Heart right ventricle (tissue), 16 donors: ENCODE measurements at regions of chr12 and their contacts with region 1.

Region 1: GRCh38 chr12:47779301-47779942 is 6.4 kb downstream of the SLC48A1 start:
- DNase-seq: peak; percentile 88 to 91
- ATAC-seq: peak; percentile 68 to 84 (median 76)
- H3K4me3 ChIP-seq: no peak overlapping the region
- H3K27ac ChIP-seq: peak overlapping the region in 2 of 10 donors; percentile 39 to 52
- H3K4me1 ChIP-seq: peaks cover 22 to 71% (median 52%) of the 10 kb centered on the region in 9 donors
- H3K27me3 ChIP-seq: no peaks in the 10 kb centered on the region
- CTCF ChIP-seq: peak; percentile 90 to 97 (median 95)

Region 2: GRCh38 chr12:47742253-47742825 is 37.1 kb before region 1 on chr12:
- intact Hi-C with region 1: loop called in 1 of 10 experiments (anchors 5 kb)
- DNase-seq: peak; percentile 45 to 63
- ATAC-seq: no peak
- H3K4me3 ChIP-seq: no peak overlapping the region
- H3K27ac ChIP-seq: peak overlapping the region in 1 of 10 donors; percentile 78
- H3K4me1 ChIP-seq: peaks cover 21 to 65% (median 42%) of the 10 kb centered on the region in 9 donors
- H3K27me3 ChIP-seq: peaks cover 0 to 5% (median 0%) of the 10 kb centered on the region in 7 donors
- CTCF ChIP-seq: peak; percentile 85 to 95 (median 89)

Region 3: GRCh38 chr12:47797441-47797840 is 18.0 kb after region 1 on chr12:
- intact Hi-C with region 1: loop called in 1 of 10 experiments (anchors 1 kb)
- DNase-seq: no peak
- ATAC-seq: peak in 4 of 8 donors; percentile 18 to 31 (median 27)
- H3K4me3 ChIP-seq: no peak overlapping the region
- H3K27ac ChIP-seq: no peak overlapping the region
- H3K4me1 ChIP-seq: peaks cover 35 to 51% (median 42%) of the 10 kb centered on the region in 9 donors
- H3K27me3 ChIP-seq: no peaks in the 10 kb centered on the region
- CTCF ChIP-seq: peak in 7 of 9 donors; percentile 31 to 58 (median 44)

Region 4: GRCh38 chr12:47819896-47820630 is 40.6 kb after region 1 on chr12 and contains the start of gene HDAC7:
- intact Hi-C with region 1: loop called in 1 of 10 experiments (anchors 5 kb)
- DNase-seq: peak; percentile 92 to 93
- ATAC-seq: peak; percentile 51 to 81 (median 72)
- H3K4me3 ChIP-seq: peak within 1 kb of the TSS; percentile 61 to 91 (median 83)
- H3K27ac ChIP-seq: peak within 1 kb of the TSS; percentile 94 to 100 (median 99)
- H3K4me1 ChIP-seq: peaks cover 28 to 90% (median 84%) of the 10 kb centered on the region in 9 donors
- H3K27me3 ChIP-seq: no peaks in the 10 kb centered on the region
- CTCF ChIP-seq: peak in 1 of 9 donors; percentile 9
- total RNA-seq, gene HDAC7: 26.9 to 50.7 (median 38.5) TPM

Region 5: DNA sequence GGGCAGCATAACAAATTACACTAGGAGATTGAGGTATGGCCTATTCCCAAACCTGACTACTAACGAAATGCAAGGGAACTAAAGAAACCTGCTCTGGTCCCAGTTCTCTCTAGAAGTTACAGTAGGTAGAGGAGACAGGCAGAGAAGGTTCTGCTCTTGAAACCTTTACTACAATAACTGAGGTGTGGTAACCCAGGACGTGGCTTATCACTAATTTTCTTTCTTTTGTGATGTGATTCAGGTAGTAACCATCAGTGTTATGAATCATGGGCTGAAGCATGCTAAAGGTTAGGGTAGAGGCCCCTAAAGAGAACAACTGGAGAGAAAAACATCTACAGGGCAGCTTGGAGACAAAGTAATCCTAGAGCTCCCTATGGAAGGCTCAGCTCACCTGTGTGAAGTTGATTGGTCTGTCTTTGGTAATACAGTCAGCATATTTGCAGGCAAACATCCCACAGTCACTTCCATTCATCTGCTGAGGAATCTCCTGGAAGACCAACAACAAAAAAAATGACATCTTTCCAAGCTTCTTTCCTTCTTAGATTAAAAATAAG is 266.6 kb after region 1 on chr12:
- intact Hi-C with region 1: no loop called
- DNase-seq: no peak
- ATAC-seq: no peak
- H3K4me3 ChIP-seq: no peak overlapping the region
- H3K27ac ChIP-seq: no peak overlapping the region
- H3K4me1 ChIP-seq: no peaks in the 10 kb centered on the region
- H3K27me3 ChIP-seq: no peaks in the 10 kb centered on the region
- CTCF ChIP-seq: no peak